A549 (cell line): ENCODE measurements at regions of chr17 and their contacts with region 1.

Region 1: GRCh38 chr17:51056813-51057510 is 63.7 kb downstream of the SPAG9 start:
- DNase-seq: peak; percentile 53 to 71
- ATAC-seq: peak; percentile 88 to 91
- H3K4me3 ChIP-seq: no peak overlapping the region
- H3K27ac ChIP-seq: peak overlapping the region in 1 of 2 experiments; percentile 36; a peak in 1 of 6 replicates
- H3K4me1 ChIP-seq: peaks cover 24% of the 10 kb centered on the region
- CTCF ChIP-seq: peak; percentile 85
- EP300 ChIP-seq: no peak
- POLR2A ChIP-seq: no peak
- RAD21 ChIP-seq: peak; percentile 69 to 70

Region 2: DNA sequence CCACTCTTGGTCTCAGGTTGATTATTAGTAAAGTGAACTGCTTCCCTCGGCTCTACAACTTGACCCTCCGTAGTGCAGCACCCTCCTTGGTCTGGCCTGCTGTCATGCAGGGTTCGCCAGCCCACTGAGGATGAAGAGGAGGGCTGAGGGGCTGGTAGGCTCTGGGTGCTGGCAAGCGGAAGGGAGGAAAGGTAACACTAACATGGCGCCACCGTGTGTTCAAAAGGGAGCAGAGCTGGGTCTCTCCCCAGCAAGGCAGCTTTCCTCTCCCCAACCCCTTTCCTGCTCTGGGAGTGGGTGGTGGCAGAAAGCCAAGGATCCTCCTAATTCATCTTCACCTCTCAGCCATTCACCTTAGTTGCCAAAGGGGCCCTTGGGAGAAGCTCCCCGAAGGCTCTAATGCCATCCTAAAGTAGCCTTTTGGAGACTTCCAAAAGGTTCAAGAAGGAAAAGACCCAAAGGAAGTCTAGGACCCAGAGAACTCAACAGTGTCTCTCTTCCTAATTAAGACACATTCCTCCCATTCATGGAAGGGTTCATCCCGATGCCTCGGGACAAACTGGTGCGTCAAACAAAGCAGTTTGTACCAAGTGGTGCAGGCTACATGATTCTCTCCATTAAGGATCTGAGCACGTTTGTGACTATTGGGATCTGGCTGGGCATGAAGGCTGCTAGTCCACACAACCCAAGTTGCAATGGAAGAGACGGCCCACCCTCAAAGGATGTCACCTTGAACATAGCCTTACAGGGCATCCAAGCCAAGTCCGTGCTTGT is 100.0 kb before region 1 on chr17:
- CTCF ChIA-PET with region 1: interaction called, 14 read pairs
- POLR2A ChIA-PET with region 1: no interaction called
- DNase-seq: peak; percentile 69 to 71
- ATAC-seq: peak; percentile 73 to 87
- H3K4me3 ChIP-seq: no peak overlapping the region
- H3K27ac ChIP-seq: peak overlapping the region; percentile 29 to 81; a peak in 3 of 6 replicates
- H3K4me1 ChIP-seq: peaks cover 23% of the 10 kb centered on the region
- CTCF ChIP-seq: peak; percentile 87
- EP300 ChIP-seq: no peak
- POLR2A ChIP-seq: no peak
- RAD21 ChIP-seq: peak; percentile 80 to 85

Region 3: GRCh38 chr17:51035431-51035830 is 21.5 kb before region 1 on chr17:
- CTCF ChIA-PET with region 1: interaction called, 24 read pairs
- POLR2A ChIA-PET with region 1: no interaction called
- DNase-seq: no peak
- ATAC-seq: no peak
- H3K4me3 ChIP-seq: no peak overlapping the region
- H3K27ac ChIP-seq: no peak overlapping the region
- H3K4me1 ChIP-seq: no peaks in the 10 kb centered on the region
- CTCF ChIP-seq: no peak
- EP300 ChIP-seq: no peak
- POLR2A ChIP-seq: no peak
- RAD21 ChIP-seq: no peak

Region 4: DNA sequence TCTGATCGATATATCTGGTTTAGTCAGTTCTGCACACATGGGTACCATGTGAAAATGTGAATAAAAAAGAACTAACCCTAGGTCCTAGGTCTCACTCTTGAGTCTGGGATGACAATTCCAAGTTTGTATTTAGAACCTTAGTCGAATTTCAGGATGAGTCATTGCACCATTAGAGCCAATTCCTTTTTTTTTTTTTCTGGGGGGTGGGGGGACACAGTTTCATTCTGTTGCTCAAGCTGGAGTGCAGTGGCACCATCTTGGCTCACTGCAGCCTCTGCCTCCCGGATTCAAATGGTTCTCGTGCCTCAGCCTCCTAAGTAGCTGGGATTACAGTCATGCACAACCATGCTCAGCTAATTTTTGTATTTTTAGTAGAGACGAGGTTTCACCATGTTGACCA is 22.1 kb after region 1 on chr17:
- CTCF ChIA-PET with region 1: interaction called, 11 read pairs
- POLR2A ChIA-PET with region 1: no interaction called
- DNase-seq: no peak
- ATAC-seq: no peak
- H3K4me3 ChIP-seq: no peak overlapping the region
- H3K27ac ChIP-seq: 0 out of 6 replicates have a peak overlapping the region, but pooled peaks of 1 of the 2 experiments have one; percentile 3
- H3K4me1 ChIP-seq: peaks cover 8% of the 10 kb centered on the region
- CTCF ChIP-seq: no peak
- EP300 ChIP-seq: no peak
- POLR2A ChIP-seq: no peak
- RAD21 ChIP-seq: no peak

Region 5: DNA sequence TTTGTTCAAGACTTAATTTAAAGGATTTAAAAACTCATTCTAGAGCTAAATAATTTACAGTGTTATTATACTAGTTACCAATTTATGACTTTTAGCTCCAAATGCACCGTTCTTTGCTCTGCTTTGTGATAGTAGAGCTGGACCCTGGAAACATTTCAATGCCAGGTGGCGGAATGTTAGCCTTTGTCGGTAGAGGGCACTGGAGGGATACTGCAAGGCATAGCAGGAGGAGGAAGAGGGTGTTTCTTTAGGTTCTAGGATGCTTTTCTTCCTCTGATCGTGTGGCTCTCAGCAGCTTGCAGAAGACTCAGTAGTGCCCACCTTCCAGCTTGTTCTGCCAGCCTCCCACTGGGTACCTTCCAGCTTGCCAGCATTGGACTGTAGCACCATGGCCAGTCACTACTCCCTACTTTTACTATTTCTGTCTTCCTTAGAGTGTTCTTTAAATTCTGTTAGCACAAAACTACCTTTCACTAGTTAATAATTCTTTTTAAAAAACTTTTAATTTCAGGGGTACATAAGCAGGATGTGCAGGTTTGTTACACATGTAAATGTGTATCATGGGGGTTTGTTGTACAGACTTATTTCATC is 528.6 kb after region 1 on chr17:
- CTCF ChIA-PET with region 1: no interaction called
- POLR2A ChIA-PET with region 1: no interaction called
- DNase-seq: peak; percentile 7 to 40
- ATAC-seq: peak; percentile 62 to 82; a peak in 4 of 6 replicates
- H3K4me3 ChIP-seq: no peak overlapping the region
- H3K27ac ChIP-seq: no peak overlapping the region
- H3K4me1 ChIP-seq: no peaks in the 10 kb centered on the region
- CTCF ChIP-seq: peak; percentile 58
- EP300 ChIP-seq: no peak
- POLR2A ChIP-seq: no peak
- RAD21 ChIP-seq: peak; percentile 61 to 78